MCF 10A (cell line): ENCODE measurements at regions of chrX and their contacts with region 1.

Region 1: GRCh38 chrX:39149761-39150160 is 348.5 kb downstream of the MID1IP1 start:
- DNase-seq: peak; percentile 62
- H3K4me3 Mint-ChIP-seq: no peak overlapping the region
- H3K27ac Mint-ChIP-seq: no peak overlapping the region
- H3K4me1 Mint-ChIP-seq: no peaks in the 10 kb centered on the region
- H3K27me3 Mint-ChIP-seq: peaks cover 59% of the 10 kb centered on the region
- CTCF ChIP-seq: peak; percentile 71

Region 2: DNA sequence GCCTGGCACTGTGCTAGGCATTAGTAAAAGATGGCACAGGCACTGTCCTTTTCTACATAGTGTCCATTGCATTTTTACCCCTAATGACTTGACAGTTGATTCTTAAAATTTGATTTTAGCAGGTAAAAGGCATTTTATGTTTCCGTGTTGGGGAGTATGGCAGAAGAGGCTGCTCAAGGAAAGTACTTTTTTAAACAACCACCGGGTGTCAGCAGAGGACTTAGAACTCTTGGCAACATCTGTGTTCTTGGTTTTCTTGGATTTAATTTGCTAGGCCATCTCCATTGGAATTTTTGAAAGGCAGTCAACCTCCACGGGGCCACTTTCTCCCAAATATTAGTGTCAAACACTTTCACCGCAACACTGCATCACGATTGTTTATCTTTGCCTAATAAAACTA is 485.5 kb before region 1 on chrX:
- CTCF ChIA-PET with region 1: no interaction called
- POLR2A ChIA-PET with region 1: no interaction called
- intact Hi-C with region 1: loop called (anchors 5 kb)
- DNase-seq: peak; percentile 64
- H3K4me3 Mint-ChIP-seq: no peak overlapping the region
- H3K27ac Mint-ChIP-seq: no peak overlapping the region
- H3K4me1 Mint-ChIP-seq: no peaks in the 10 kb centered on the region
- H3K27me3 Mint-ChIP-seq: peaks cover 37% of the 10 kb centered on the region
- CTCF ChIP-seq: peak; percentile 62

Region 3: GRCh38 chrX:38768079-38768478 is 381.7 kb before region 1 on chrX:
- CTCF ChIA-PET with region 1: interaction called, 6 read pairs
- POLR2A ChIA-PET with region 1: no interaction called
- intact Hi-C with region 1: loop called (anchors 1 kb)
- DNase-seq: peak; percentile 35
- H3K4me3 Mint-ChIP-seq: no peak overlapping the region
- H3K27ac Mint-ChIP-seq: no peak overlapping the region
- H3K4me1 Mint-ChIP-seq: no peaks in the 10 kb centered on the region
- H3K27me3 Mint-ChIP-seq: peaks cover 40% of the 10 kb centered on the region
- CTCF ChIP-seq: peak; percentile 48

Region 4: DNA sequence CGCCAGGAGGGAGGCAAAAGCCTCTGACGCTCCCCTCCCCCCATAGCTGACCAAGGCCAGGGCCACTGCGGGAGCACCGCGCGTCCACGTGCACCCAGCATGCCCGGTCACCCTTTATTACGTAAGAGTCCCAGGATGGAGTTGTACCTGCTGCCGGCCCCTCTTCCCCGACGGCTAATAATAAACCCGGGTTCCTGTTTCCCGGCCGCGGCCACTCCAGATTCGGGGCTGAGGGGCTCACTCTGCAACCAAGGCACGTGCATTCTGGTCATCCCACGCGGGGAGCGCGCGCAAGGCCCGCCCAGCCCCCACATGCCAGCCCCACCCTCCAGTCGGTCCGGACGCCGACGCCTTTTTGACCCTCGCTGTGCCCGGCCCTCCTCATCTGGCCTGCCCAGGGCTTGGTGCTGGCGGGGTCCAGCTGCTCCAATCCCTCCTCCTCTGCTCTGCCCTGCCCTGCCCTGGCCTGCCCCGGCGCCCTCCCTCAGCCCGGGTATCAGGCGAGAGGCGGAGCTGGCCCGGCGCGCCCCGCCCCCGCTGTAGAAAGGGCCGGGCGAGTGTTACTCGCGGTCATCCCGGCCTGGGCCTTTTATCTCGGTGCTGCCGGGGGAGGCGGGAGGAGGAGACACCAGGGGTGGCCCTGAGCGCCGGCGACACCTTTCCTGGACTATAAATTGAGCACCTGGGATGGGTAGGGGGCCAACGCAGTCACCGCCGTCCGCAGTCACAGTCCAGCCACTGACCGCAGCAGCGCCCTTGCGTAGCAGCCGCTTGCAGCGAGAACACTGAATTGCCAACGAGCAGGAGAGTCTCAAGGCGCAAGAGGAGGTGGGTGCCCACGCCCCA is 346.0 kb before region 1 on chrX:
- CTCF ChIA-PET with region 1: no interaction called
- POLR2A ChIA-PET with region 1: no interaction called
- intact Hi-C with region 1: loop called (anchors 2 kb)
- DNase-seq: peak; percentile 84
- H3K4me3 Mint-ChIP-seq: peak overlapping the region; percentile 83
- H3K27ac Mint-ChIP-seq: peak overlapping the region; percentile 81
- H3K4me1 Mint-ChIP-seq: peaks cover 3% of the 10 kb centered on the region
- H3K27me3 Mint-ChIP-seq: peaks cover 11% of the 10 kb centered on the region
- CTCF ChIP-seq: no peak

Region 5: GRCh38 chrX:38985375-38985774 is 164.4 kb before region 1 on chrX:
- CTCF ChIA-PET with region 1: no interaction called
- POLR2A ChIA-PET with region 1: no interaction called
- intact Hi-C with region 1: loop called (anchors 5 kb)
- DNase-seq: peak; percentile 18
- H3K4me3 Mint-ChIP-seq: no peak overlapping the region
- H3K27ac Mint-ChIP-seq: no peak overlapping the region
- H3K4me1 Mint-ChIP-seq: no peaks in the 10 kb centered on the region
- H3K27me3 Mint-ChIP-seq: peaks cover 55% of the 10 kb centered on the region
- CTCF ChIP-seq: no peak

Region 6: GRCh38 chrX:39242187-39242586 is 92.4 kb after region 1 on chrX:
- CTCF ChIA-PET with region 1: interaction called, 11 read pairs
- POLR2A ChIA-PET with region 1: no interaction called
- intact Hi-C with region 1: loop called (anchors 1 kb)
- DNase-seq: peak; percentile 51
- H3K4me3 Mint-ChIP-seq: no peak overlapping the region
- H3K27ac Mint-ChIP-seq: no peak overlapping the region
- H3K4me1 Mint-ChIP-seq: no peaks in the 10 kb centered on the region
- H3K27me3 Mint-ChIP-seq: peaks cover 37% of the 10 kb centered on the region
- CTCF ChIP-seq: peak; percentile 37